ENCODE measurements at regions of chr20 and their contacts with region 1.

Region 1: GRCh38 chr20:3854462-3854871 is 7.8 kb downstream of the MAVS start:
- DNase-seq: no peak
- H3K4me3 Mint-ChIP-seq: no peak overlapping the region
- H3K27ac Mint-ChIP-seq: no peak overlapping the region
- H3K4me1 Mint-ChIP-seq: peaks cover 9% of the 10 kb centered on the region
- H3K27me3 Mint-ChIP-seq: no peaks in the 10 kb centered on the region

Region 2: GRCh38 chr20:3543901-3544507 is 310.5 kb before region 1 on chr20:
- intact Hi-C with region 1: no loop called
- DNase-seq: no peak
- H3K4me3 Mint-ChIP-seq: no peak overlapping the region
- H3K27ac Mint-ChIP-seq: no peak overlapping the region
- H3K4me1 Mint-ChIP-seq: peaks cover 3% of the 10 kb centered on the region
- H3K27me3 Mint-ChIP-seq: no peaks in the 10 kb centered on the region

Region 3: DNA sequence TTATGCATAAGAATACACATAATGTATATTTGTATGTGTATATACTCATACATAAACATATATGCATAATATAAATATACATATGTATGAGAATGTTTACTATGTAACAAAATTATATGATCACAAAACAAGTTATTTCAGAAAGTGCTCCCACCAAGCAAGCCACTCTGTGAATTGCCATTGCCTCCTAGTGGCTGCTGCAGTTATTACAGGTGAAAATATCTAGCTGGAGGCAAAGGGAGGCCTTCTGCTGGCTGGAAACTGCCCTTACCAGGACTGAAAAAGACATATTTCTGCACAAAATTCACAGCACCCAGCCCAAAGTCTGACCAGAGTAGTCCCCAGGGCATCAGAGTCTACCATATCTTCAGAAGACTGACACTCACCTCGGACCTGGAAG is 158.3 kb before region 1 on chr20:
- intact Hi-C with region 1: no loop called
- DNase-seq: no peak
- H3K4me3 Mint-ChIP-seq: no peak overlapping the region
- H3K27ac Mint-ChIP-seq: no peak overlapping the region
- H3K4me1 Mint-ChIP-seq: no peaks in the 10 kb centered on the region
- H3K27me3 Mint-ChIP-seq: no peaks in the 10 kb centered on the region

Region 4: GRCh38 chr20:3786665-3787323 is 67.7 kb before region 1 on chr20 and contains the start of gene CENPB:
- intact Hi-C with region 1: loop called (anchors 1 kb)
- DNase-seq: peak; percentile 98
- H3K4me3 Mint-ChIP-seq: peak within 1 kb of the TSS; percentile 87
- H3K27ac Mint-ChIP-seq: peak within 1 kb of the TSS; percentile 79
- H3K4me1 Mint-ChIP-seq: peaks cover 32% of the 10 kb centered on the region
- H3K27me3 Mint-ChIP-seq: no peaks in the 10 kb centered on the region
- total RNA-seq, gene CENPB: 72.8 and 74.4 TPM in 2 replicates

Region 5: DNA sequence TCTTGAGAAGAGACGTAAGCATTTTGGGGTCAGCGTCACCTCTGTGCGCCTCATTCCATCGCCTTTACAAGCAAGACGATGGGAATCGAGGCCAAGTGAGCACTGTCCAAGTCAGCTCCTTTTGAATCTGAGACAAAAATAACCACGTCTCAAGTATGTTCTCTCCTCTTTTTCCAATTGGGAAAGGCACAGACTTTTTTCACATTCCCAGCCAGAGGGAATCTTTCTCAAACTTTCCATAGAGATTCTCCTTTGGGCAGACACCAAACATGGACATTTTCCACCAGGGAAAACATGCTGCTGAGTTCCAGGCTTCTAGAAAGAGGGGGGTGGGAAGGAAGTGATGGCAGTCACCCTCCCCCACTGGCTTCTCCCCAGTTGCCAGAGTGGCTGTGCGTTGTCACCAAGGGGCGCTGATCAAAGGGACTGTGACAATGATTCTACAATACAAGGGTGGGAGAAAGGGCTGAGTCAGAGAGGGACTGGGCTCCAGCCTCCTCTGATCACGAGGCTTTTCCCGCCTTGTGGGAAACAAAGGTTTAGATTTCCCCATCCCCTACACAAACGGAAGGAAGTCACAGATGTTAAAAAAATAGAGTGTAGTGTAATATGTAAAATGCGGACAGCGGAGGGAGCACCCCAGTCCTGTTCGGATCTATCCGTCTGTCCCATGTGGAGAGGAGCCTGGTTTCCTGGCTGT is 442.8 kb after region 1 on chr20:
- intact Hi-C with region 1: no loop called
- DNase-seq: no peak
- H3K4me3 Mint-ChIP-seq: no peak overlapping the region
- H3K27ac Mint-ChIP-seq: no peak overlapping the region
- H3K4me1 Mint-ChIP-seq: no peaks in the 10 kb centered on the region
- H3K27me3 Mint-ChIP-seq: peaks cover 12% of the 10 kb centered on the region